Right lobe of liver (tissue), 6 donors: ENCODE measurements at regions of chr12 and their contacts with region 1.

Region 1: GRCh38 chr12:101830367-101831325 is at the start of gene GNPTAB:
- DNase-seq: peak; percentile 95 to 96 (median 95)
- ATAC-seq: peak; percentile 97 to 99 (median 98)
- H3K4me3 ChIP-seq: peak within 1 kb of the TSS; percentile 75 to 81 (median 77)
- H3K27ac ChIP-seq: peak within 1 kb of the TSS; percentile 48 to 73 (median 71)
- H3K4me1 ChIP-seq: peaks cover 0 to 5% (median 0%) of the 10 kb centered on the region in 4 donors
- H3K27me3 ChIP-seq: no peaks in the 10 kb centered on the region
- CTCF ChIP-seq: peak; percentile 67 to 92 (median 74)
- POLR2A ChIP-seq: peak; percentile 69
- total RNA-seq, gene GNPTAB: 8.8 to 17.4 (median 14.1) TPM

Region 2: GRCh38 chr12:101414533-101415119 is 416.0 kb before region 1 on chr12:
- intact Hi-C with region 1: loop called in 1 of 2 experiments (anchors 10 kb)
- DNase-seq: no peak
- ATAC-seq: peak; percentile 66 to 80 (median 74)
- H3K4me3 ChIP-seq: no peak overlapping the region
- H3K27ac ChIP-seq: no peak overlapping the region
- H3K4me1 ChIP-seq: no peaks in the 10 kb centered on the region
- H3K27me3 ChIP-seq: no peaks in the 10 kb centered on the region
- CTCF ChIP-seq: peak; percentile 57 to 72 (median 58)
- POLR2A ChIP-seq: no peak

Region 3: DNA sequence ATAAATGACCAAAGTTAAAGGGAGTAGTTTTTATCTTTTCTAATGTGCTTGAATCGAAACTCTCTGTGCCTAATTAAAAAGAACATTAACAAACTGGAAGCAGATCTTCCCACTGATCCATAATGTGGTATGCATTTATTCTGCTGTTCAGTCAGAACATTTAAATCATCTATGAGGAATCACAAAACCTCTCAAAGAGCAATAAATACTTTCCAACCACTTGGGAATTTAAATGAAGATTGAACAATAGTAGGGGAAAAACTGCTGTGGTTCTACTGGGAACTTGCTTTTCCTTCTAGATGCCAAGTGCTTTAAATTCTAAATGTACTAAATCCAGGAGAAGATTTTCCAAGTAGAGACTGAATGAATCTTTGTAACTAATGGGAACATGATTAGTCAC is 145.6 kb before region 1 on chr12:
- intact Hi-C with region 1: no loop called
- DNase-seq: no peak
- ATAC-seq: no peak
- H3K4me3 ChIP-seq: no peak overlapping the region
- H3K27ac ChIP-seq: no peak overlapping the region
- H3K4me1 ChIP-seq: no peaks in the 10 kb centered on the region
- H3K27me3 ChIP-seq: no peaks in the 10 kb centered on the region
- CTCF ChIP-seq: no peak
- POLR2A ChIP-seq: no peak

Region 4: GRCh38 chr12:101727133-101727532 is 103.5 kb before region 1 on chr12:
- intact Hi-C with region 1: no loop called
- DNase-seq: no peak
- ATAC-seq: no peak
- H3K4me3 ChIP-seq: no peak overlapping the region
- H3K27ac ChIP-seq: no peak overlapping the region
- H3K4me1 ChIP-seq: no peaks in the 10 kb centered on the region
- H3K27me3 ChIP-seq: no peaks in the 10 kb centered on the region
- CTCF ChIP-seq: no peak
- POLR2A ChIP-seq: no peak

Region 5: GRCh38 chr12:101773650-101774162 is 56.9 kb before region 1 on chr12:
- intact Hi-C with region 1: loop called (anchors 10 kb)
- DNase-seq: peak in 2 of 3 donors; percentile 32 to 65
- ATAC-seq: peak; percentile 90 to 94 (median 92)
- H3K4me3 ChIP-seq: no peak overlapping the region
- H3K27ac ChIP-seq: no peak overlapping the region
- H3K4me1 ChIP-seq: no peaks in the 10 kb centered on the region
- H3K27me3 ChIP-seq: no peaks in the 10 kb centered on the region
- CTCF ChIP-seq: peak; percentile 93 to 96 (median 94)
- POLR2A ChIP-seq: no peak